HCT116 (cell line): ENCODE measurements at regions of chr7 and their contacts with region 1.

Region 1: DNA sequence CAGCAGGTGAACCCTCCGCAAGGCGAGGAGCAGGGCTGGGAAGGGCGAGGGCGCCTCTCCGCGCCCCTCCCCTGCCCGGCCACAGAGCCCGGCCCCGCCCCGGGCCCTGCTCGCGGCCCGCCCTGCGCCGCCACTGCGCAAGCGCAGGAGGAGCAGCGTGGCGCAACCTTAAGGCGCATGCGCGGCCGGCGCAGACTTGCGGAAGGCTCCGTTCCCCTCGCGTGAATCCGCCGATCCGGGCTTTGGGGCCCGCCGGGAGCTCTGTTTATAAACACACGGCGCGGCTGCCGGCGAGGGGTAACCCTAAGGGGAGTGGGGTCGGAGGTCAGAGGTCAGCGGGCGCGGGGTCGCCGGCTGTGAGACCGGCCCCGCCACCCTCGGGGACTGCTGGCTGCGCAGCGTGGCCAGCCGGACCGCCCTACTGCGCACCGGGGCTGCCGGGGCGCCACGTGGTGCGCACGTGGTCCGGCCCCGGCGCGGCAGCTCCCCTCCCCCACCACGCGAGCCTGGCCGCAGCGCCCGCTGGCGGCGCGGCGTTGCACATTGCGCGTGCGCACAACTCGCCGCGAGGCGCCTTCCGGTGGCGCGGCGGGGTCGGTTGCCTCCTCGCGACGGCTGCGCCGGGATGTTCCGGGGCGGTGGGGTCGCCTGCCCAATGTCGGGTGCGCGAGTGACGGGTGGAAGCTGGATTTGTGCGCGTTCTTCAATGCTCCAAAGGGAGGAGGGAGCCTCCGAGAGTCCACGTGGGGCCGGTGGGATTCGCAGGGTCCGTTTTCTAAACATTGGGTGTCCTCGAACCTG is 40.2 kb upstream of the FOXK1 start:
- DNase-seq: peak; percentile 83
- ATAC-seq: peak; percentile 93
- H3K4me3 ChIP-seq: peak overlapping the region; percentile 63 to 65
- H3K27ac ChIP-seq: peak overlapping the region; percentile 90
- H3K4me1 ChIP-seq: peaks cover 5 to 24% of the 10 kb centered on the region in 2 experiments; a peak in 3 of 4 replicates
- H3K27me3 ChIP-seq: no peaks in the 10 kb centered on the region
- CTCF ChIP-seq: peak in 2 of 3 experiments; percentile 30 to 34; a peak in 3 of 6 replicates
- POLR2A ChIP-seq: peak; percentile 74
- RAD21 ChIP-seq: no peak; the same call in 1 of the 2 replicates

Region 2: GRCh38 chr7:4655311-4655710 is 13.4 kb after region 1 on chr7:
- CTCF ChIA-PET with region 1: no interaction called
- POLR2A ChIA-PET with region 1: no interaction called
- RAD21 ChIA-PET with region 1: no interaction called
- intact Hi-C with region 1: no loop called
- DNase-seq: no peak
- ATAC-seq: no peak
- H3K4me3 ChIP-seq: no peak overlapping the region
- H3K27ac ChIP-seq: no peak overlapping the region
- H3K4me1 ChIP-seq: no peaks in the 10 kb centered on the region; a peak in 1 of 4 replicates
- H3K27me3 ChIP-seq: no peaks in the 10 kb centered on the region
- CTCF ChIP-seq: no peak
- POLR2A ChIP-seq: no peak
- RAD21 ChIP-seq: no peak

Region 3: DNA sequence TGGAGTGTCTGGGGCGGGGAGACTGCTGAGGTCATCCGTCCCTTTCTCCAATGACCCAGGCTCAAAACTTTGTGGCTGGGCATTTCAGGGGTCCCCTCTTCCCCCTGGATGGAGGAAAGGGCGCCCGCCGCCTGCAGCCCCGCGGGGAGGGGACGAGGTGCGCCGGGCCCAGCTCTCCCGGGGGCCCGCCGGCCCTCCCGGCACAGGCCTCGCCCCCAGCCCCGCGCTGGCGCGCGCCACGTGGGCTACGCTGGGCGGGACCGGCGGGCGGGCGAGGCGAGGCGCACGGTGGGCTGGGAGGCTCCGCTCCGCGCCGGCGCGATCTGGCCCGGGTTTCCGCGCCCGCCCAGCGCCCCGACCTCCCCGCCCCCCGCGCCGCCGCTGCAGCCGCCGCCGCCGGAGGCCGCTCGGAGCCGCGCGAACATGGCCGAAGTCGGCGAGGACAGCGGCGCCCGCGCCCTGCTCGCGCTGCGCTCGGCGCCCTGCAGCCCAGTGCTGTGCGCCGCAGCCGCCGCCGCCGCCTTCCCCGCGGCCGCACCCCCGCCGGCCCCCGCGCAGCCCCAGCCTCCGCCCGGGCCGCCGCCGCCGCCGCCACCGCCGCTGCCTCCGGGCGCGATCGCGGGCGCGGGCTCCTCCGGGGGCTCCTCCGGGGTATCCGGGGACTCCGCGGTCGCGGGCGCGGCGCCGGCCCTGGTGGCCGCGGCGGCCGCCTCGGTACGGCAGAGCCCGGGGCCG is 40.2 kb after region 1 on chr7 and contains the start of gene FOXK1:
- CTCF ChIA-PET with region 1: no interaction called
- POLR2A ChIA-PET with region 1: interaction called, 10 read pairs
- RAD21 ChIA-PET with region 1: interaction called, 3 read pairs
- intact Hi-C with region 1: loop called (anchors 1 kb)
- DNase-seq: no peak
- ATAC-seq: peak; percentile 78
- H3K4me3 ChIP-seq: peak within 1 kb of the TSS; percentile 91 to 94
- H3K27ac ChIP-seq: peak within 1 kb of the TSS; percentile 91
- H3K4me1 ChIP-seq: peaks cover 10 to 30% of the 10 kb centered on the region in 2 experiments
- H3K27me3 ChIP-seq: no peaks in the 10 kb centered on the region
- CTCF ChIP-seq: no peak
- POLR2A ChIP-seq: peak; percentile 59
- RAD21 ChIP-seq: no peak
- total RNA-seq, gene FOXK1: 60.5 TPM

Region 4: GRCh38 chr7:4744391-4745264 is 102.8 kb after region 1 on chr7:
- CTCF ChIA-PET with region 1: no interaction called
- POLR2A ChIA-PET with region 1: no interaction called
- RAD21 ChIA-PET with region 1: no interaction called
- intact Hi-C with region 1: loop called (anchors 2 kb)
- DNase-seq: peak; percentile 85
- ATAC-seq: peak; percentile 99
- H3K4me3 ChIP-seq: peak overlapping the region in 1 of 2 experiments; percentile 23; a peak in 2 of 4 replicates
- H3K27ac ChIP-seq: peak overlapping the region; percentile 61
- H3K4me1 ChIP-seq: peaks cover 21 to 32% of the 10 kb centered on the region in 2 experiments
- H3K27me3 ChIP-seq: no peaks in the 10 kb centered on the region
- CTCF ChIP-seq: no peak
- POLR2A ChIP-seq: no peak
- RAD21 ChIP-seq: no peak